GM10248 (cell line): ENCODE measurements at regions of chr3 and their contacts with region 1.

Region 1: DNA sequence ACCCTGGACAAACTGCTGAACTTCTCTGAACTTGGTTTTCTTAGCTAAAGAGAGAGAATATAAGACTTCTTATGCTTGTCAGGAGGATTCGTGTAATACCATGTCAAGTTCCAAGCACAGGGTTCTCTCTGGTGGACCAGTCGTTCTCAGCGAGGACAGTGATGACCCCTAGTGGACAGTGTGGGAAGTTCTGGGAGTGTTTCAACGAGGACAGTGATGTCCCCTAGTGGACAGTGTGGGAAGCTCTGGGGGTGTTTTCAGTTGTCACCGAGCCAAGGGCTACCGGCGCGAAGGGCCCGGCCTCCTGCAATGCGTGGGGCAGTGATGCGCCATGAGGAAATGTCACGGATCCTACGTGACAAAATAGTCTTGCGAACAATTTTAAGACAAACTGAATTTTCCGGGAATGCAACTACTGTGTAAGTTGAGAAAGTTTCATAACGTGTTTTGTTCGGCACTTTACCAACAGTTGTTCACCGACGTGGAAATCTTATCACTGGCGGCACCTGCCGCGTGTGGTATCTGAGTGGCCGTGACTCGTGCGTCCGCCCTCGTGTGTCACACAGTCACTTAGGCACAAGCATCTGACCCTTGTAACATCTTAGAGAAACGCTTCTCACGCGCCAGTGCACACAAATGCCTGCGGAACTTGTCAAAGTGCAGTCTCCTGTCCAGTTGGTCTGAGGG is 39.3 kb upstream of the MUC4 start:
- DNase-seq: peak; percentile 92
- CTCF ChIP-seq: peak; percentile 99

Region 2: GRCh38 chr3:195746751-195747150 is 104.2 kb before region 1 on chr3:
- CTCF ChIA-PET with region 1: interaction called, 10 read pairs
- POLR2A ChIA-PET with region 1: no interaction called
- DNase-seq: no peak
- CTCF ChIP-seq: no peak

Region 3: DNA sequence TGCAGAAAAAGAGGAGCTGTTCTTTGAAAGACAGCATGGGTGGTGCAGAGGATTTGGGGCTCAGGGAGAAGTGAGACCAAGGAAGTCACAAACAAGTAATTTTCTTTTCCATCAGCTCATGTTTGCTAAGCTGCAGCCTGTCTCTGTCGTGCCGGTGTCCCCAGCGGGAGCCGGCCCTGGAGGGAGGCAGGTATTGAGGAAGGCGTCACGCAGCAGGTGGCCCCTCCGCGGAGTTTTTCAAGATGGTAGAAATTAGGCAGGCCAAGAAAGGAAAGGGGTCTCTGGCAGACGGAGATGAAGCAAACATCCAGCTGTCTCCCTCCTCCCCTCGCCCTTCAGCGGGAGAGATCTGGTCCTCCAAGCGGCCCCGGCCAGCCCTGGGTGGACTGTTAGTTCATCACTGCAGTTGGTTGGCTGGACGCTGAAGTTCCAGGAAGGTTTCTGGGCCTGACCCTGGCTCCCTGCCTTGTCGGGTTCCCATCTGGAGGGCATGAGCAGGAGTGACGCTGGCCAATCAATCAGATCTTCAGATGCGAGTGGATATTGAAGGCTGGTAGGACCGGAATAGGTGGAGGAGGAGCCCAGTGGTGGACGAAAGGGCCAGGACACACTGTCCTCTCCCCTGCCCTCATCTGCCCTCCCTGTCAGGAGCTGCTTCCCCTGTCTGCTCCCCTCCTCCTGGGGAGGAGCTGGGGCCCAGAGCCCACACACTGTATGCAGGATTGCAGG is 11.6 kb before region 1 on chr3:
- CTCF ChIA-PET with region 1: interaction called, 63 read pairs
- POLR2A ChIA-PET with region 1: no interaction called
- DNase-seq: no peak
- CTCF ChIP-seq: no peak

Region 4: GRCh38 chr3:195894780-195895607 is 44.0 kb after region 1 on chr3:
- CTCF ChIA-PET with region 1: interaction called, 254 read pairs
- POLR2A ChIA-PET with region 1: no interaction called
- DNase-seq: peak; percentile 82
- CTCF ChIP-seq: peak; percentile 97